Activated CD4-positive, alpha-beta T cell treated with anti-CD3 and anti-CD28 coated beads for 36 hours (primary cell): ENCODE measurements at regions of chr16 and their contacts with region 1.

Region 1: GRCh38 chr16:58129097-58129936 is at the start of gene CFAP20:
- DNase-seq: peak; percentile 98
- ATAC-seq: peak; percentile 94
- H3K4me3 Mint-ChIP-seq: peak within 1 kb of the TSS; percentile 75
- H3K27ac Mint-ChIP-seq: peak within 1 kb of the TSS; percentile 84
- H3K4me1 Mint-ChIP-seq: peaks cover 38% of the 10 kb centered on the region
- H3K27me3 Mint-ChIP-seq: no peaks in the 10 kb centered on the region
- total RNA-seq, gene CFAP20: 45.9 to 48.7 TPM

Region 2: DNA sequence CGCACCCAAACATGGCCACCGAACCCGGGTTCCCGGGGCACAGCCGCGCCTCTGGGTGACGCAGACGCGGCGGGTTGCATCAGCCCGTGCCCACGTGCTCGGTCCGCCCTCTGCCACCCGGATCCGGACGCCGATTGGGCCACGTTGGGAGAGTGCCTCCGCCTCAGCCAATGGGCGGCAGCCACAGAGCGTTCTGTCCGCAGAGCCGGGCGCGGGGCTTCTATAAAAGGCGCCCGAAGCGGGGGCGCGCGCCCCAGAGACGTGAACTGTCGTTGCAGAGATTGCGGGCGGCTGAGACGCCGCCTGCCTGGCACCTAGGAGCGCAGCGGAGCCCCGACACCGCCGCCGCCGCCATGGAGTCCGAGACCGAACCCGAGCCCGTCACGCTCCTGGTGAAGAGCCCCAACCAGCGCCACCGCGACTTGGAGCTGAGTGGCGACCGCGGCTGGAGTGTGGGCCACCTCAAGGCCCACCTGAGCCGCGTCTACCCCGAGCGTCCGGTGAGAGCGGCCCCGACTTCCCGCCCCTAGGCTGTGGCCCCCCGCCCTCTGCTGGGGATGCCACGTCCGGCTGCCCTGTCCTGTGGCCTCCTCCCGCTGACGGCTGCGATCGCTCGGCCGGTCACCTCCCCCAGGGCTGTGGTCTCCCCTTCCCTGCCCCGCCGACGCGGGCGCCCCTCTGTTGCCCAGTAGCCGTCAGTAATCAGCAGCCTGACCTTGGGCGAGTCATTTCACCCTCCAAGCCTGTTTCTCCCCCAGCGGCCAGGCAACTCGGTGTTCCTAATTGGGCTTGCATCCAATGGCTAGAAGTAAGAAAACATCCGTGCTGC is 1197.2 kb before region 1 on chr16 and contains the start of gene HERPUD1:
- CTCF ChIA-PET with region 1: no interaction called
- POLR2A ChIA-PET with region 1: no interaction called
- intact Hi-C with region 1: loop called in 1 of 2 experiments (anchors 5 kb)
- DNase-seq: peak; percentile 100
- ATAC-seq: peak; percentile 94
- H3K4me3 Mint-ChIP-seq: peak within 1 kb of the TSS; percentile 98
- H3K27ac Mint-ChIP-seq: peak within 1 kb of the TSS; percentile 95
- H3K4me1 Mint-ChIP-seq: peaks cover 40% of the 10 kb centered on the region
- H3K27me3 Mint-ChIP-seq: no peaks in the 10 kb centered on the region
- total RNA-seq, gene HERPUD1: 136 to 195 TPM

Region 3: GRCh38 chr16:57447186-57447962 is 681.9 kb before region 1 on chr16 and contains the starts of genes CIAPIN1 and COQ9:
- CTCF ChIA-PET with region 1: no interaction called
- POLR2A ChIA-PET with region 1: no interaction called
- intact Hi-C with region 1: loop called in 1 of 2 experiments (anchors 5 kb)
- DNase-seq: peak; percentile 96
- ATAC-seq: peak; percentile 99
- H3K4me3 Mint-ChIP-seq: peak within 1 kb of the TSS; percentile 91
- H3K27ac Mint-ChIP-seq: peak within 1 kb of the TSS; percentile 85
- H3K4me1 Mint-ChIP-seq: peaks cover 32% of the 10 kb centered on the region
- H3K27me3 Mint-ChIP-seq: no peaks in the 10 kb centered on the region
- total RNA-seq, gene CIAPIN1: 41.7 to 42.6 TPM
- total RNA-seq, gene COQ9: 39.4 to 52.1 TPM

Region 4: GRCh38 chr16:57899771-57900661 is 229.3 kb before region 1 on chr16:
- CTCF ChIA-PET with region 1: interaction called, 4 read pairs
- POLR2A ChIA-PET with region 1: no interaction called
- intact Hi-C with region 1: loop called in 1 of 2 experiments (anchors 5 kb)
- DNase-seq: peak; percentile 87
- ATAC-seq: peak; percentile 77
- H3K4me3 Mint-ChIP-seq: no peak overlapping the region
- H3K27ac Mint-ChIP-seq: no peak overlapping the region
- H3K4me1 Mint-ChIP-seq: peaks cover under 1% of the 10 kb centered on the region
- H3K27me3 Mint-ChIP-seq: peaks cover 8% of the 10 kb centered on the region

Region 5: DNA sequence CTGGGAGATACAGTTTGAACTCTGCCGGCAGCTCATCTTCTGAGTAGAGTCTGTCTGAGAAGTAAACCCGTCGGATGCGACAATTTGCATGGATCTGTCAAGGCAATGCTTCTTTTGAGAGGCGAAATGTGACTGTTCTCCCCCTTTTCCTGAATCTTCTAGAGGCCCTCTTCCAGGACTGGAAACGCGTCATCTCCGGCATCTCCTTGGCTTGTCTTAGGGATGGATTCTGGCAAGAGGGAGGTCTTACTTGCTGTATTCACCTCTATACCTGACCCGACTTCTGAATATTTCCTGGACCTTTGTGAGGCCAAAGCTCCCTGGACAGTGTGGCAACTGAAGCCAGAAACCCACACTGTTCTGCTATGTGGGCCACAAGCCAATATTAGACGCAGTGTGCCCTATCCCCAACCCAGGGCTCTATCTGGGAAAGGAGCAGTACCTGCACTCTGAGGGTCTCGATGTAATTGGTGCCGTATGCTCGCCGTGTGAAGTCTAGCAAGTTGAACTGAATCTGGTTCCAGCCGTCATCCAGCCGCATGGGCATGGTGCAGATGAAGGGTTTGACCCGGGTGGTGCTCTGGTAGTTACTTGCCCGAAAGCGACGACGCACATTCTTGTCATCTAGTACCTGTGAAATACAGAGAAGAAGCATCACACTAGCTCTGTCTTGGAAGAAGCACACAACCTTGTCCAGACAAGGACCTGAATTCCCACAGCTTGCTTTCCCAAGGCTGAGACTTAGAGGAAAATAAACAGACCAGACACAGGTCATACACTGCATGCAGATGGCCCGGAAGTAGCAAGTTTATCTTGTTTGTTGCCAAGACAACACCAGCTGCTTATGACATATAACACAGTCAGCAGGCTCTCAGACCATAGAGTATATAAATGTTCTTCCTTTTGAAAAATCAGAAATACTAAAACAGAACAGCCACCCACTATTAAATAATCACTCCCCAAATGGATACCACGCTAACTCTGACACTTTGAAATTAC is 14.2 kb before region 1 on chr16:
- CTCF ChIA-PET with region 1: interaction called, 16 read pairs
- POLR2A ChIA-PET with region 1: no interaction called
- intact Hi-C with region 1: no loop called
- DNase-seq: no peak
- ATAC-seq: no peak
- H3K4me3 Mint-ChIP-seq: no peak overlapping the region
- H3K27ac Mint-ChIP-seq: no peak overlapping the region
- H3K4me1 Mint-ChIP-seq: peaks cover 8% of the 10 kb centered on the region
- H3K27me3 Mint-ChIP-seq: no peaks in the 10 kb centered on the region

Region 6: DNA sequence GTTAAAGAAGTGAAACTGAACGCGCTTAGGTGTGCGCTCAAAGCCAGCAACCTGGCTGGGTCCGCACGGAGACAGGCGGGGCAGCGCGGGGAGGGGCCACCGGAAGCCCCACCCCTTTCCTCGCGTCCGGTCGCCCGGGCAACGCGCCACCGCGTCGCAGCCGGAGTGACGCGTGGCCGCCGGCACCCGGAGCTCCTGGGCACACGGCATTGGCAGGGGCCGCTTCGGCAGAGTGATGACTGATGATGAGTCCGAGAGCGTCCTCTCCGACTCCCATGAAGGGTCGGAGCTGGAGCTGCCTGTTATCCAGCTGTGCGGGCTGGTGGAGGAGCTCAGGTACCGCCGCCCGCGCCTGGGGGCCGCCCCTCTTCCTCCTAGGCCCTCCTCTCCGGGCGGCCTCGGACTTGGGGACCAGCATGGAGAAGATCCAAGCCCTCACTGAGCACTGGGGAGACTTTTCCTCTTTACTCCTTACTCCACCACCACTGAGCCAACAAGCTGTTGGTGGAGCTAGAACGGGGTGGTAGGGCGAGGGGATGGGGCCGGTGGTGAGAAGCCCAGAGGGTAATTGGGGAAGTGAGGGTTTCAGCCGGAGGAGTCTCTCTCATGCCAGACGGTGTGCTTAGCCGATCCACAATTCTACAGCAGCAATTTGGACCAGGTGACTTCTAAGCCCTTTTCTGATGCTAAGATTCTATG is 120.6 kb after region 1 on chr16:
- CTCF ChIA-PET with region 1: interaction called, 6 read pairs
- POLR2A ChIA-PET with region 1: interaction called, 7 read pairs
- intact Hi-C with region 1: loop called in 1 of 2 experiments (anchors 1 kb)
- DNase-seq: peak; percentile 92
- ATAC-seq: peak; percentile 98
- H3K4me3 Mint-ChIP-seq: peak overlapping the region; percentile 81
- H3K27ac Mint-ChIP-seq: peak overlapping the region; percentile 85
- H3K4me1 Mint-ChIP-seq: peaks cover 8% of the 10 kb centered on the region
- H3K27me3 Mint-ChIP-seq: no peaks in the 10 kb centered on the region

Region 7: GRCh38 chr16:58661199-58661830 is 532.0 kb after region 1 on chr16:
- CTCF ChIA-PET with region 1: no interaction called
- POLR2A ChIA-PET with region 1: no interaction called
- intact Hi-C with region 1: no loop called
- DNase-seq: peak; percentile 35
- ATAC-seq: peak; percentile 91
- H3K4me3 Mint-ChIP-seq: no peak overlapping the region
- H3K27ac Mint-ChIP-seq: no peak overlapping the region
- H3K4me1 Mint-ChIP-seq: no peaks in the 10 kb centered on the region
- H3K27me3 Mint-ChIP-seq: peaks cover 6% of the 10 kb centered on the region

Region 8: GRCh38 chr16:58733671-58734458 is 604.5 kb after region 1 on chr16 and contains the start of gene GOT2:
- CTCF ChIA-PET with region 1: no interaction called
- POLR2A ChIA-PET with region 1: interaction called, 4 read pairs
- intact Hi-C with region 1: loop called in 1 of 2 experiments (anchors 2 kb)
- DNase-seq: peak; percentile 90
- ATAC-seq: peak; percentile 92
- H3K4me3 Mint-ChIP-seq: peak within 1 kb of the TSS; percentile 92
- H3K27ac Mint-ChIP-seq: peak within 1 kb of the TSS; percentile 97
- H3K4me1 Mint-ChIP-seq: peaks cover 42% of the 10 kb centered on the region
- H3K27me3 Mint-ChIP-seq: no peaks in the 10 kb centered on the region
- total RNA-seq, gene GOT2: 128 to 133 TPM